HCT116 (cell line): ENCODE measurements at regions of chr6 and their contacts with region 1.

Region 1: DNA sequence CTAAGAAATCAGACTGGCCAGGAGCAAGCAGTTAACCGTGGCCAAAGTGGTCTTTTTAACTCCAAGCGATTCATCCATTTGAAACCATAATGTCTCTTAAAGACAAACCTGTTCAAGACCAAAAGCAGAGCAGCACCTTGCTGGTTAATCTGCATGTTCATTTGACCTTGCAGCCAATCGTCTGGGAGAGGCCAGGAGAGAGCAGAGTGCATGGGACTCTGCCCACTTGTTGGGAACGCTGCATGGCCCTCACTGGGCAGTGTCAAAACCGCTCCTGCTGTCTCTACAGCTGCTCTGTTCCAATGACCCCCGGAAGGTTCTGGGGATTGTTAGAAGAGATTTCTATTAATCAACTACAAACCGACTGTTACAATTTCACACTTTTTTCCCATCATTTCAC is 79.6 kb downstream of the OLIG3 start:
- DNase-seq: no peak
- ATAC-seq: no peak
- H3K4me3 ChIP-seq: no peak overlapping the region
- H3K27ac ChIP-seq: no peak overlapping the region
- H3K4me1 ChIP-seq: no peaks in the 10 kb centered on the region
- H3K27me3 ChIP-seq: no peaks in the 10 kb centered on the region
- CTCF ChIP-seq: no peak
- POLR2A ChIP-seq: no peak
- RAD21 ChIP-seq: no peak

Region 2: GRCh38 chr6:137271245-137272183 is 143.1 kb before region 1 on chr6:
- CTCF ChIA-PET with region 1: no interaction called
- POLR2A ChIA-PET with region 1: no interaction called
- RAD21 ChIA-PET with region 1: no interaction called
- intact Hi-C with region 1: loop called (anchors 5 kb)
- DNase-seq: peak; percentile 65
- ATAC-seq: peak; percentile 84
- H3K4me3 ChIP-seq: no peak overlapping the region
- H3K27ac ChIP-seq: no peak overlapping the region
- H3K4me1 ChIP-seq: no peaks in the 10 kb centered on the region
- H3K27me3 ChIP-seq: no peaks in the 10 kb centered on the region
- CTCF ChIP-seq: peak; percentile 82 to 90 (median 85); a peak in 5 of 6 replicates
- POLR2A ChIP-seq: no peak
- RAD21 ChIP-seq: peak; percentile 87

Region 3: GRCh38 chr6:137680705-137681346 is 266.2 kb after region 1 on chr6:
- CTCF ChIA-PET with region 1: no interaction called
- POLR2A ChIA-PET with region 1: no interaction called
- RAD21 ChIA-PET with region 1: no interaction called
- intact Hi-C with region 1: no loop called
- DNase-seq: no peak
- ATAC-seq: no peak
- H3K4me3 ChIP-seq: peak overlapping the region in 1 of 2 experiments; percentile 25; a peak in 2 of 4 replicates
- H3K27ac ChIP-seq: no peak overlapping the region
- H3K4me1 ChIP-seq: peaks cover 10 to 16% of the 10 kb centered on the region in 2 experiments
- H3K27me3 ChIP-seq: no peaks in the 10 kb centered on the region
- CTCF ChIP-seq: no peak
- POLR2A ChIP-seq: no peak
- RAD21 ChIP-seq: no peak